GM12878 (cell line): ENCODE measurements at regions of chr22 and their contacts with region 1.

Region 1: GRCh38 chr22:37244114-37244921 is at the start of gene RAC2:
- DNase-seq: no peak
- ATAC-seq: peak; percentile 69
- H3K4me3 ChIP-seq: peak within 1 kb of the TSS; percentile 91
- H3K27ac ChIP-seq: peak within 1 kb of the TSS; percentile 96
- H3K4me1 ChIP-seq: peaks cover 49% of the 10 kb centered on the region
- H3K27me3 ChIP-seq: no peaks in the 10 kb centered on the region
- CTCF ChIP-seq: no peak
- EP300 ChIP-seq: 0 out of 4 replicates have a peak, but pooled peaks of 1 of the 2 experiments have one; percentile 37
- POLR2A ChIP-seq: peak; percentile 98
- RAD21 ChIP-seq: no peak
- polyA plus RNA-seq, gene RAC2: 102 to 108 TPM

Region 2: DNA sequence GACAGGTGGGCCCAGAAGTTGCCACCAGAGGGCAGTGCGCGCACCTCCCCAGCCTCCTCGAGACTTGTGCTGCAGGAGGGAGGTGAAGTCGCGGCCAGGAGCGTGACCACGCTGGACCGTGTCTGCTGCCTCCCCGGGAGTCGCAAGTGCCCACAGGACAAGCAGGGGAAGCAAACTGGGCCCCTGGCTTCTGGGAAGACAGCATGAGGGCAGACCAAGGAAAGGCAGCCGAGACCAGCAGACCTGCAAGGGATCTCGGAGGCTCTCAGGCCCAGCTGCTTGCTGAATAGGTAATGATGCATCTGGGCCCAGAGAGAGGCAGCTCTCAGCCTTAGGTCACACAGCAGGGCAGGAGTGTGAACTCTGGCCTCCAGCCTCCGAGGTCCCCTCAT is 77.6 kb before region 1 on chr22:
- CTCF ChIA-PET with region 1: interaction called, 18 read pairs
- POLR2A ChIA-PET with region 1: interaction called, 27 read pairs
- RAD21 ChIA-PET with region 1: interaction called, 25 read pairs
- SMC1A ChIA-PET with region 1: interaction called, 11 read pairs
- in situ Hi-C with region 1: no loop called
- intact Hi-C with region 1: loop called (anchors 5 kb)
- DNase-seq: no peak
- ATAC-seq: peak; percentile 21
- H3K4me3 ChIP-seq: no peak overlapping the region; the same call in 1 of the 2 replicates
- H3K27ac ChIP-seq: no peak overlapping the region; the same call in 1 of the 2 replicates
- H3K4me1 ChIP-seq: peaks cover 62% of the 10 kb centered on the region
- H3K27me3 ChIP-seq: no peaks in the 10 kb centered on the region
- CTCF ChIP-seq: peak in 2 of 3 experiments; percentile 87 to 92; a peak in 5 of 6 replicates
- EP300 ChIP-seq: no peak
- POLR2A ChIP-seq: no peak
- RAD21 ChIP-seq: peak; percentile 77

Region 3: GRCh38 chr22:37218771-37219411 is 25.4 kb before region 1 on chr22:
- CTCF ChIA-PET with region 1: interaction called, 59 read pairs
- POLR2A ChIA-PET with region 1: interaction called, 246 read pairs
- RAD21 ChIA-PET with region 1: interaction called, 196 read pairs
- SMC1A ChIA-PET with region 1: interaction called, 109 read pairs
- in situ Hi-C with region 1: no loop called
- intact Hi-C with region 1: loop called (anchors 2 kb)
- DNase-seq: peak; percentile 99
- ATAC-seq: peak; percentile 82
- H3K4me3 ChIP-seq: peak overlapping the region; percentile 80
- H3K27ac ChIP-seq: peak overlapping the region; percentile 99
- H3K4me1 ChIP-seq: peaks cover 73% of the 10 kb centered on the region
- H3K27me3 ChIP-seq: no peaks in the 10 kb centered on the region
- CTCF ChIP-seq: no peak
- EP300 ChIP-seq: peak; percentile 85 to 89
- POLR2A ChIP-seq: peak; percentile 62; the same call in 1 of the 2 replicates
- RAD21 ChIP-seq: no peak

Region 4: DNA sequence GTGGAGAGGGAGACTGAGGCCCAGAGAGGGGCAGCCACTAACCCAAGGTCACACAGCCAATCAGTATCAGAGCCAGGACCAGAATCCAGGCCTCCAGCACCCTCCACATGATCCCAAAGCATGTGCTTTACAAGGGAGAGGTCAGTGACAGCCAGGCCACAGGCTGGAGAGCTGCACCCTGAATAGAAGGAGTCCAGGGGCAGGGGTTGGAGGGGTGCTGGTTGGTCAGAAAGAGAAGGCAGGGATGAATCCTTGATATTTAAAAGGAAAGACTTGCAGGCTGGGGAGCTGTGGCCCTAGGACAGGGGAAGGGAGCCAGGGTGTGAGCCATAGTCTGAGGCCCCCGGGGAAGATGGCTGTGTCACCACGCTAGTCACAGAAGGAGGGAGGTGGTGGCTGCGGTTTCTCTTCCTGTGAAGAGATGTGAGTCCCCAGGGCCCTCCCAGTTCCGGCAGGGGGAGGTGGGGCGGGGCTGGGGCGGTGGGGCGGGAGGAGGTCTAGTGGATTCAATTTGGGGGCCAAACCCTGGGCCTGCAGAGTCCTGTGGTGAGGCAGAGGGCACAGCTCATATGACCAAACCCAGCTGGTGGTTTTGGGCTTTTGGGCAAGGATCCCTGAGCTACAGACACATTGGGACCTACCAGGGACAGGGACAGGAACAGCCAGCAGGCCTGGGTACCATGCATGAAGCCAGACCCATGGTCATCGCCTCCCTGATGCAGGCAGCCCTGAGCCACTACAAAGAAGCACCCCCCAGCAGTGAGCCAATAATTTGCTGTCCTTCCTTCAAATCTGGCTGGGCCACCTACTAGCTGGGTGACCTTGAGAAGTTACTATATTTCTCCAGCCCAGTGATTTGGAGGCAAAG is 14.3 kb before region 1 on chr22:
- CTCF ChIA-PET with region 1: interaction called, 49 read pairs
- POLR2A ChIA-PET with region 1: interaction called, 246 read pairs
- RAD21 ChIA-PET with region 1: interaction called, 196 read pairs
- SMC1A ChIA-PET with region 1: interaction called, 109 read pairs
- in situ Hi-C with region 1: no loop called
- intact Hi-C with region 1: loop called (anchors 2 kb)
- DNase-seq: peak; percentile 60
- ATAC-seq: peak; percentile 88
- H3K4me3 ChIP-seq: peak overlapping the region; percentile 60; the same call in 1 of the 2 replicates
- H3K27ac ChIP-seq: peak overlapping the region; percentile 100
- H3K4me1 ChIP-seq: peaks cover 70% of the 10 kb centered on the region
- H3K27me3 ChIP-seq: no peaks in the 10 kb centered on the region
- CTCF ChIP-seq: no peak
- EP300 ChIP-seq: no peak
- POLR2A ChIP-seq: peak; percentile 69
- RAD21 ChIP-seq: no peak

Region 5: DNA sequence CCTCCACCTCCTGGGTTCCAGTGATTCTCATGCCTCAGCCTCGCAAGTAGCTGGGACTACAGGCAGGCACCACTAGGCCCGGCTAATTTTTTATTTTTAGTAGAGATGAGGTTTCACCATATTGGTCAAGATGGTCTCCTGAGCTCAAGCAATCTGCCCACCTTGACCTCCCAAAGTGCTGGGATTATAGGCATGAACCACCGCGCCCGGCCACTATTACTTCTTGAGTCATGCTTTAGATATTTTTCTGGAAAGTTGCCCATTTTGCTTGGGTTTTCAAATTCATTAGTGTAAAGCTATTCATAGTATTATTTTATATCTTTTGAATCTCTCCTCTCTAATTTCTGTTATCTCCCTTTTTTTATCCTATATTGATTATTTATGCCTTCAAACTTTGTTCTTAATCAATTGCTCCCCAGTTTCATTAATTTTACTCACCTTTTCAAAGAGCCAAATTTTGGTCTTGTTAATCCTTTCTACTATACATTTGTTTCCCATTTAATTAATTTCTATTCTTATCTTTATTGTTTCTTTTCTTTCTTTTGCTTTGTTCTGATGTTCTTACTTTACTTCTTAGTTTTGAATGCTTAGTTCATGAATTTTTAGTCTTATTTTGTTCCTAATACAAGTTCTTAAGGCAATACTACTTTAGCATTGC is 10.0 kb after region 1 on chr22:
- CTCF ChIA-PET with region 1: interaction called, 265 read pairs
- POLR2A ChIA-PET with region 1: interaction called, 51 read pairs
- RAD21 ChIA-PET with region 1: interaction called, 132 read pairs
- SMC1A ChIA-PET with region 1: interaction called, 165 read pairs
- in situ Hi-C with region 1: no loop called
- intact Hi-C with region 1: no loop called
- DNase-seq: no peak
- ATAC-seq: no peak
- H3K4me3 ChIP-seq: no peak overlapping the region
- H3K27ac ChIP-seq: no peak overlapping the region
- H3K4me1 ChIP-seq: peaks cover 8% of the 10 kb centered on the region; the same call in 1 of the 2 replicates
- H3K27me3 ChIP-seq: no peaks in the 10 kb centered on the region
- CTCF ChIP-seq: no peak
- EP300 ChIP-seq: no peak
- POLR2A ChIP-seq: no peak
- RAD21 ChIP-seq: no peak

Region 6: GRCh38 chr22:37282385-37282677 is 38.0 kb after region 1 on chr22 and contains the start of gene CYTH4:
- CTCF ChIA-PET with region 1: interaction called, 5 read pairs
- POLR2A ChIA-PET with region 1: interaction called, 11 read pairs
- RAD21 ChIA-PET with region 1: interaction called, 9 read pairs
- SMC1A ChIA-PET with region 1: interaction called, 4 read pairs
- in situ Hi-C with region 1: no loop called
- intact Hi-C with region 1: no loop called
- DNase-seq: no peak
- ATAC-seq: peak; percentile 79
- H3K4me3 ChIP-seq: peak within 1 kb of the TSS; percentile 69
- H3K27ac ChIP-seq: peak within 1 kb of the TSS; percentile 93
- H3K4me1 ChIP-seq: peaks cover 30% of the 10 kb centered on the region
- H3K27me3 ChIP-seq: no peaks in the 10 kb centered on the region
- CTCF ChIP-seq: no peak
- EP300 ChIP-seq: no peak
- POLR2A ChIP-seq: peak; percentile 80
- RAD21 ChIP-seq: no peak
- polyA plus RNA-seq, gene CYTH4: 1.5 to 1.8 TPM